OCI-LY7 (cell line): ENCODE measurements at regions of chr7 and their contacts with region 1.

Region 1: DNA sequence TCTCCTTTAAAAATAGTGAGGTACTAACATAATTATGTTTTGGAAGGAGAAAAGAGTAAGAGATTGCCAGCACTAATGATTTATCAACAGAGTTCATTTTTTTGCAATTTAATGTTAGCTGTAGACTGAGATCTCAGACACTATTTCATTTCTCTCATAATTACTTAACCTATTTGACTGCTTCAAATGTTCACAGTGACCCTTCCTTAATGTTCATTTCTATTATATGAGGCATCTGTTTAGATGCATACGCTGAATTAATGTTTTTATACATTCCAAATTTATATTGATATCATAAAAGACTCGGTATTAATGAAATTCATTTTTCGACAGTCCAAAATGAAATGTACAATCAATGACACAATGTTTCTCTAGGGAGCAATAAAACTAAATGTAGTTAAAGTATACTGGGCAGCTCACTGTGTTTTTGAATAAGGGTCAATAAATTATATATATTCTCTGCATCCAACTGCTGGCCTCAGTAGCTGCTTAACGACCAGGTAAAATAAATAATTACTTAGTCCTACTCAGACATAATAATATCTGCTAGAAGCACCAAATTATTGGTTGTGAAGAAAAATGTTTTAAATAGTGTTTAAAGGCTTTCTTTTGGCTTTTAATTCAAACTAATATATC is 373.4 kb downstream of the MAGI2 start:
- DNase-seq: no peak
- H3K4me3 ChIP-seq: no peak overlapping the region
- H3K27ac ChIP-seq: no peak overlapping the region
- H3K4me1 ChIP-seq: no peaks in the 10 kb centered on the region
- CTCF ChIP-seq: no peak

Region 2: GRCh38 chr7:79036356-79036755 is 43.7 kb before region 1 on chr7:
- CTCF ChIA-PET with region 1: no interaction called
- POLR2A ChIA-PET with region 1: no interaction called
- intact Hi-C with region 1: loop called (anchors 2 kb)
- DNase-seq: no peak
- H3K4me3 ChIP-seq: no peak overlapping the region
- H3K27ac ChIP-seq: no peak overlapping the region
- H3K4me1 ChIP-seq: no peaks in the 10 kb centered on the region
- CTCF ChIP-seq: no peak